ENCODE measurements at regions of chr5 and their contacts with region 1.

Region 1: DNA sequence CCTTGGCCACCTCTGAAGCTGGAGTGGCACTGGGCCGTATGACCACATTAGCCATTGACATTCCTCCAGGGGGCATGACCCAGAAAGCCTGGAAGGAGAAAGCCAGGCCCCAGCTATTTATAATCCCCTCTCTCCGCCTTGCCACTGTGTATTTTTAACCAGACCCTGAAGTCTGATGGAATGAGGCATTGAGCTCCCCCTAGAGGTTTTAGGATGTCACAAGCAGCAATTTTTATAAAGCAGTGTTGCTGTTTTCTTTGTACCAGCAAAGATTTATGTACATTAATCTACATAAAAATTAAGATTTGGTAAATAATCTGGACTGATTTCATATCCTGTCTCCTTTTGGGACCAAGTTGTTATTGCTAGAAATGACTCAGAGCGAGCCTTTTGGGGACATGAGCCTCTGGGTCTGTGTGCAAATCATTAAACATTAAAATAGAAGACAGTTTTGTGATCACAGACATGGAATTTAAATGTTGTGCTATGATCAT is 127.1 kb downstream of the TRIO start:
- DNase-seq: peak; percentile 38
- ATAC-seq: peak; percentile 76
- H3K4me3 Mint-ChIP-seq: no peak overlapping the region
- H3K27ac Mint-ChIP-seq: peak overlapping the region; percentile 99
- H3K4me1 Mint-ChIP-seq: peaks cover 61% of the 10 kb centered on the region
- H3K27me3 Mint-ChIP-seq: no peaks in the 10 kb centered on the region
- CTCF ChIP-seq: peak; percentile 66; the same call in 1 of the 2 replicates

Region 2: DNA sequence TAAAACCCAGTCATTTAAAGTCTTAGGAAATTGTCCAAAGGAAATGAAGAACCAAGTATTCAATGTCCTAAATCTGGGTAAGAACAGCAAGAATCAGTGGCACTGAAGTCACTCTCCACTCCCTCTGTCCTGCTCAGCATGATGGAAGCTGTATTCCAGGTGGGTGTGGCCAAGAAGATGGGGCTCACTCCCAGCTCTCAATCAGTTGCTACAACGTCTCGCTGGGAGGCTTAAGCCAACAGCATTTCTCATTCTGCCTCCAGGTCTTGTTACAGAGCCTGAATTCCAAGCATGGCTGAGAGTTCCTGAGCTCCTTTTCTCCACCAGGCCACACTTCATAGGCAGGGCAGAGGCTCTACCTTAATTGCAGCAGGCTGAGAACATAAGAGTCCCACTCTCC is 168.3 kb before region 1 on chr5:
- CTCF ChIA-PET with region 1: interaction called, 12 read pairs
- POLR2A ChIA-PET with region 1: no interaction called
- DNase-seq: peak; percentile 46
- ATAC-seq: peak; percentile 98
- H3K4me3 Mint-ChIP-seq: no peak overlapping the region
- H3K27ac Mint-ChIP-seq: peak overlapping the region; percentile 63; the same call in 1 of the 2 replicates
- H3K4me1 Mint-ChIP-seq: peaks cover 7% of the 10 kb centered on the region
- H3K27me3 Mint-ChIP-seq: no peaks in the 10 kb centered on the region; the same call in 1 of the 2 replicates
- CTCF ChIP-seq: no peak

Region 3: DNA sequence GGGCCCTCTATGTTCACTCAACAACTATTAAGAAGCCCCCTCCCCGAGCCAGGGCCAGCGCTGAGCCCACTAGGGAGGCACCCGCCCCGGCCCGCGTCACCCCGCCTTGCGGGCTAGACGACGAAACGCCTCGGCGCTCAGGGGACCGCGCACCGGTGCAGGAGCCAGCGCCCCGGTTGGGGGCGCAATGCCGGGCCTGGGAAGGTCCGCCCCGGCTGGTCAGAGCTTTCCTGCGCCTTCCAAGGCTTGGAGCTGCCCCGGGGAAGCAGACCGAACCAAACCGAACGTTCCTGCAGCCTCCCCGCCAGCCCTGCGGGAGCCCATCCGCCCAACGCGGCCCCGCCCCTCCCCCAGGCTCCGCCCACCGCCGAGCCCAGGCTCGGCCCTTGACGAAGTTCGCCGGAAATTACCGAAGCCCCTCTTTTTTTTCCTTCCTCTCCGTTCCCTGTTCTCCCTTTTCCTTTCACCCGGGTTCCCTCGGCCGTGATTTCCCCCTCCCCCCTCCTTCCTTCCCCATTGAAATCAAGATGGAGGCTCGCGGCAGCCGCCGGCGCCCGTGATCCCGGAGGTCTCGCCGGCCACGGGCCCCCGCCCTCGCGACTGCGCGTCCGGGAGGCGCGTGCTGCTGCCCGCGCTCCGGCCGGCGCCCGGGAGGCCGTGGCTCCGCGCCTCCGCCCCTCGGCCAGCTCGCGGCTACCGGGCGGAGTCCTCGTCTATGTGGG is 127.3 kb before region 1 on chr5 and contains the start of gene TRIO:
- CTCF ChIA-PET with region 1: interaction called, 45 read pairs
- POLR2A ChIA-PET with region 1: no interaction called
- DNase-seq: peak; percentile 93
- ATAC-seq: peak; percentile 81
- H3K4me3 Mint-ChIP-seq: peak within 1 kb of the TSS; percentile 81
- H3K27ac Mint-ChIP-seq: peak within 1 kb of the TSS; percentile 80
- H3K4me1 Mint-ChIP-seq: peaks cover 42% of the 10 kb centered on the region
- H3K27me3 Mint-ChIP-seq: peaks cover 8% of the 10 kb centered on the region; the same call in 1 of the 2 replicates
- CTCF ChIP-seq: peak; percentile 32; the same call in 1 of the 2 replicates
- total RNA-seq, gene TRIO: 69.2 to 88.8 TPM (median 73.5 TPM) in 3 replicates

Region 4: GRCh38 chr5:14179446-14179845 is 90.8 kb before region 1 on chr5:
- CTCF ChIA-PET with region 1: interaction called, 13 read pairs
- POLR2A ChIA-PET with region 1: no interaction called
- DNase-seq: no peak
- ATAC-seq: no peak
- H3K4me3 Mint-ChIP-seq: no peak overlapping the region
- H3K27ac Mint-ChIP-seq: no peak overlapping the region
- H3K4me1 Mint-ChIP-seq: peaks cover 74% of the 10 kb centered on the region
- H3K27me3 Mint-ChIP-seq: no peaks in the 10 kb centered on the region
- CTCF ChIP-seq: no peak

Region 5: GRCh38 chr5:14258840-14259239 is 11.4 kb before region 1 on chr5:
- CTCF ChIA-PET with region 1: interaction called, 30 read pairs
- POLR2A ChIA-PET with region 1: interaction called, 3 read pairs
- DNase-seq: peak; percentile 58
- ATAC-seq: peak; percentile 79
- H3K4me3 Mint-ChIP-seq: peak overlapping the region; percentile 51
- H3K27ac Mint-ChIP-seq: peak overlapping the region; percentile 94
- H3K4me1 Mint-ChIP-seq: peaks cover 80% of the 10 kb centered on the region
- H3K27me3 Mint-ChIP-seq: no peaks in the 10 kb centered on the region
- CTCF ChIP-seq: no peak

Region 6: DNA sequence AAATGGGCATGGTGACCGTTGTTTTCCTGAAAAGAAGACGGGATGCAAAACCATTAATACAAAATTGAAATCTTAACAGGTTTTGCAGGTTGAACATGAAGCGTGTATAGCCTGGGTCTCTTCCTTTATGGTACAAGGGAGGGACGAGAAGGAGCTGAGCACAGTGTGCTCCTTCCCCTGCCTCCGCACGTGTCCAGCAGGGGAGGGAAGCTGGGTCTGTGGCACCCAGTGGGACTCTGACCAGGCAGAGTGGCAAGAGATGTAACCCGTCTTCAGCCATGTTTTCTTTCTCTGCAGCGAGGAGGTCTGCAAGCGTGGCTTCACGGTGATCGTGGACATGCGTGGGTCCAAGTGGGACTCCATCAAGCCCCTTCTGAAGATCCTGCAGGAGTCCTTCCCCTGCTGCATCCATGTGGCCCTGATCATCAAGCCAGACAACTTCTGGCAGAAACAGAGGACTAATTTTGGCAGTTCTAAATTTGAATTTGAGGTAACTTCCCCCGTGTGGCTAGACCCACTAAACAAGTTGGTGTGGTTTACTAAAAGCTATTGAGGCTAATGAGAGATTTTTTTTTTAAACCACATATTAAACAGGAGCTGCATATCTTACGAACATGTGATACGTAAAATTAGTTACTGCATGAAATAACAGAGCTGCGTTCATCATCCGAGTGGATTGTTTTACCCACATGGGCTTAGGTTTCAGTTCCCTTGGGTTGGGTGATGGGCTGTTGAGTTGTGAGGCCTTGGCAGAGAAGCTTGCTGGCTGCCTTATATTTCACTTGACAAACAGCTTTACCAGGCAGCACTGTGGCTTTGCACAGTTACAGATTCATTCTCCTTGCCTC is 16.5 kb after region 1 on chr5:
- CTCF ChIA-PET with region 1: interaction called, 13 read pairs
- POLR2A ChIA-PET with region 1: no interaction called
- DNase-seq: no peak
- ATAC-seq: no peak
- H3K4me3 Mint-ChIP-seq: no peak overlapping the region
- H3K27ac Mint-ChIP-seq: no peak overlapping the region
- H3K4me1 Mint-ChIP-seq: peaks cover 28% of the 10 kb centered on the region
- H3K27me3 Mint-ChIP-seq: no peaks in the 10 kb centered on the region
- CTCF ChIP-seq: no peak

Region 7: DNA sequence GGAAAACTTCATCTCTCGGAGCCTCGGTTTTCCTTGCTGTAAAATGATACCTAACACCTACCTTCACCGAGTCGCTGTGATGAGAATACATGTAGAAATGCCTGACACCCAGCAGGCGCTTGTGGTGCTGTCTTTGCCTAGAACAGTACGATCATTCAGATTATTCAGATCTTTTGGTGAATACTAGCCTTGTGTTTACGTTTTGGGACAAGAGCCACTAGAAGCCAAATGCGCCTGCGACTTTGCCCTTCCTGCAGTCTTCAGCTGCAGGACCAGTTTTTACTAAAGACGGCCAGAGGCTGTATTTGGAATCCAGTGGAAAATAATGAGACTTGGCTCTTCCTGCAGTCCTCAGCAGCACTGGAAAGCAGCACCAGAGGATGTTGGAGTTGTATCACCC is 62.5 kb after region 1 on chr5:
- CTCF ChIA-PET with region 1: no interaction called
- POLR2A ChIA-PET with region 1: no interaction called
- DNase-seq: no peak
- ATAC-seq: no peak
- H3K4me3 Mint-ChIP-seq: no peak overlapping the region
- H3K27ac Mint-ChIP-seq: peak overlapping the region; percentile 34
- H3K4me1 Mint-ChIP-seq: peaks cover 19% of the 10 kb centered on the region
- H3K27me3 Mint-ChIP-seq: no peaks in the 10 kb centered on the region
- CTCF ChIP-seq: no peak

Measured in WTC11 (cell line).